Heart right ventricle (tissue), 16 donors: ENCODE measurements at regions of chr15 and their contacts with region 1.

Region 1: GRCh38 chr15:88274553-88275460 is 18.3 kb upstream of the NTRK3 start:
- DNase-seq: peak; percentile 43 to 59
- ATAC-seq: peak in 7 of 8 donors; percentile 52 to 82 (median 71)
- H3K4me3 ChIP-seq: no peak overlapping the region
- H3K27ac ChIP-seq: no peak overlapping the region
- H3K4me1 ChIP-seq: no peaks in the 10 kb centered on the region
- H3K27me3 ChIP-seq: peaks cover 0 to 39% (median 13%) of the 10 kb centered on the region in 7 donors
- CTCF ChIP-seq: peak; percentile 61 to 85 (median 81)

Region 2: DNA sequence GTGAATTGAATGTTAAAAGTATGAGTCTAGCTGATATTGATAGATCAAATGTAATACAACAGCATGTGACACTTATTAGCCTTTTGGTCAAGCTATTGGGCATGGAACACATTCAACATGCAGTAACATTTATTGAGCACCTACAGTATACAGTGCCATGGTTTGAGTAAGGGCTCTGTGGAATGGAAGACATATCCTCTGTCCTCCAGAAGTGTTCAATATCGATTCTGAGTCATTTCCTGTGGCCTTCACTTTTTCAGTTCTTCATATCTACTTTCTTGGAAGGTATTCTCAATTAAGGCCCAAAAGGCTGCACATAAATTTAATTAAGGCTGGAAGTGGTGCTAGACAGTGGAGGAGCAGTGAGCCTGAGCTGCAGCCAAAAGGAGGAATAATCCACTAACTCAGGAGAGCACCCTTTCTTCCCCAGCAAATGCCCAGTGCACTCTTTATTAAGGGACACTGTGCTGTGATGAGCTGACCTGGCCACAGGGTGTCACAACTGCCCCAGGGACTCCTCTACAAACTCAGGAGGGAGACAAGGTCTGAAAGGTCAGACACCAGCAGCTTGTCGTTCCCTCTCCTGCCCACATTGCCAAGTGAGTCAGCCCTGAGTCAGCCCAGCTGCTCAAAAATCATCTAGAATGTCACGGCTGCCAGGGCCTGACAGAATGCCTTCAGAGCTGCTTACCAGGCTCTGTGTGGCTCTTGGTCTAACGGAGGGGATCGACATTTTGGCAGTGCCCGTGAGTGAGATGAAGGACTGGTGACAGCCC is 1650.4 kb before region 1 on chr15:
- intact Hi-C with region 1: loop called in 1 of 10 experiments (anchors 10 kb)
- DNase-seq: peak; percentile 71 to 75
- ATAC-seq: peak; percentile 96 to 100 (median 98)
- H3K4me3 ChIP-seq: no peak overlapping the region
- H3K27ac ChIP-seq: peak overlapping the region in 5 of 10 donors; percentile 3 to 50 (median 34)
- H3K4me1 ChIP-seq: peaks cover 0 to 11% (median 0%) of the 10 kb centered on the region in 9 donors
- H3K27me3 ChIP-seq: no peaks in the 10 kb centered on the region
- CTCF ChIP-seq: peak; percentile 27 to 66 (median 50)

Region 3: DNA sequence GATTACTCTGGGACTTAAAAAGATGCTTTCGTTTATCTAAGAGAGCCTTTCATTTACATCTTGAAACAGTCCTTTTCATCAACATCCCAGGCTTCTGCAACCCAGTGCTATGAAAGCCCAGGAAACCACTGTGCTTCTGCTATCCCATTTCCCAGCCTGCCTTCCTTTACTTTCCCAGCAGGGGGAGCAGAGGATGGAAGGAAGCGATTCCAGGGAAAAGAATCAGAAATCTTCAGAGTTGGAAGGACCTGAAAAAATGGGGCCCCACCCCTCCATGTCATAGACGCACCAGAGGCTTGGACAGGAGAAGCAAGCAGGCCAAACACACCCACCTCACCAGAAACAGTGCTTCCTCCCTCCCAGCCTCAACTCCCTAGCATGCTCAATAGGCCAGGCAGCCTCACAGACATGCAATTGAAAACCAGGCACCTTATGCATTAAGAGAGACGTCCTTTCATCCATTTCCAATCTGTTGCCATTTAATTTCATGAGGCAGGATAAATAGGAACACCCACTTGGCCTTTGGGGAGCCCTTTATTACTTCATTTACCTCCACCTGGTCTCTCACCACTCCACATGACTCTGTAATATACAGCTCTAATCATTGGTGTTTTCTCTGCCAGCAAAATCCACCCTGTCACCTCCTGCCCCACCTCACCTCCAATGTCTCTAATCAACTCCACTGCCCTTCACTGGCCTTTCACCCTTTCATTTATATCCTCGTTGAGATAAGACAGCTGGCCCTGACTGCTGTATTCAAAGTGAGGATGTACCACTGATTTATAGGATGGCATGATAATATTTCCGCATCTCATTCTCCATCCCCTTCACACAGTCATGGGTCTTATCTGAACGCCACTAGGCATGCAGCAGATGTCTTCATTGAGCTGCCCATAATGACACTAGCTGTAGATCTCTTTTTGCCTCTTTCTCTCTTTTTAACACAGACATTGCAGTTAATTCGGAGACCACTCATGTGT is 602.2 kb before region 1 on chr15:
- intact Hi-C with region 1: loop called in 1 of 10 experiments (anchors 10 kb)
- DNase-seq: peak in 1 of 2 donors; percentile 23
- ATAC-seq: peak in 2 of 8 donors; percentile 41 to 49
- H3K4me3 ChIP-seq: no peak overlapping the region
- H3K27ac ChIP-seq: no peak overlapping the region
- H3K4me1 ChIP-seq: peaks cover 0 to 7% (median 0%) of the 10 kb centered on the region in 9 donors
- H3K27me3 ChIP-seq: no peaks in the 10 kb centered on the region
- CTCF ChIP-seq: peak in 8 of 9 donors; percentile 30 to 69 (median 62)

Region 4: GRCh38 chr15:88331280-88331679 is 56.5 kb after region 1 on chr15:
- intact Hi-C with region 1: loop called in 1 of 10 experiments (anchors 10 kb)
- DNase-seq: peak in 1 of 2 donors; percentile 17
- ATAC-seq: peak in 1 of 8 donors; percentile 29
- H3K4me3 ChIP-seq: no peak overlapping the region
- H3K27ac ChIP-seq: no peak overlapping the region
- H3K4me1 ChIP-seq: no peaks in the 10 kb centered on the region
- H3K27me3 ChIP-seq: peaks cover 0 to 24% (median 10%) of the 10 kb centered on the region in 7 donors
- CTCF ChIP-seq: peak in 7 of 9 donors; percentile 20 to 53 (median 36)

Region 5: DNA sequence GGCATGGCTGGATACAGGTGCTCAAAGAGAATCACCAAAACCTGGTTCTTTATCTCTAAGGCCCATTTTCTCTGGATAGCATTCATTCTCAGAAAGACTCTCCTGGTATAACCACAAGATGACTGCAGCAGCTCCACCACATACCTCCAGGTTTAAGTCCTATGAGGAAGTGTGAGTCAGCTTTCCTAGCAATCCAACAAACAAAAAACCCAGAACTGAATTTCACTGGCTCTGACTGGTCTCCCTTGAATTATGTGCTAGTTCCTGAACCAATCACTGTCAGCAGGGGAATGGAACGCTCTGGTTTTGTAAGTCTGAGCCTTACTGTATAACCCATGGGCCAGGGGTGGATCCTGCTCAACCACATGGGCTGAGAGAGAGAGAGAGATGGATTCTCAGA is 165.2 kb after region 1 on chr15:
- intact Hi-C with region 1: loop called in 1 of 10 experiments (anchors 10 kb)
- DNase-seq: no peak
- ATAC-seq: no peak
- H3K4me3 ChIP-seq: no peak overlapping the region
- H3K27ac ChIP-seq: no peak overlapping the region
- H3K4me1 ChIP-seq: no peaks in the 10 kb centered on the region
- H3K27me3 ChIP-seq: peaks cover 0 to 38% (median 20%) of the 10 kb centered on the region in 7 donors
- CTCF ChIP-seq: no peak

Region 6: GRCh38 chr15:88467073-88467934 is 192.5 kb after region 1 on chr15 and contains the starts of genes MRPL46 and MRPS11:
- intact Hi-C with region 1: no loop called
- DNase-seq: peak; percentile 90 to 92
- ATAC-seq: peak; percentile 93 to 98 (median 97)
- H3K4me3 ChIP-seq: peak within 1 kb of the TSS; percentile 76 to 94 (median 80)
- H3K27ac ChIP-seq: peak within 1 kb of the TSS; percentile 84 to 98 (median 95)
- H3K4me1 ChIP-seq: peaks cover 5 to 56% (median 30%) of the 10 kb centered on the region in 9 donors
- H3K27me3 ChIP-seq: no peaks in the 10 kb centered on the region
- CTCF ChIP-seq: no peak
- total RNA-seq, gene MRPL46: 63.4 to 108 (median 81.5) TPM
- total RNA-seq, gene MRPS11: 53.3 to 72.6 (median 64.7) TPM